Common myeloid progenitor, CD34-positive (primary cell): ENCODE measurements at regions of chr4 and their contacts with region 1.

Region 1: DNA sequence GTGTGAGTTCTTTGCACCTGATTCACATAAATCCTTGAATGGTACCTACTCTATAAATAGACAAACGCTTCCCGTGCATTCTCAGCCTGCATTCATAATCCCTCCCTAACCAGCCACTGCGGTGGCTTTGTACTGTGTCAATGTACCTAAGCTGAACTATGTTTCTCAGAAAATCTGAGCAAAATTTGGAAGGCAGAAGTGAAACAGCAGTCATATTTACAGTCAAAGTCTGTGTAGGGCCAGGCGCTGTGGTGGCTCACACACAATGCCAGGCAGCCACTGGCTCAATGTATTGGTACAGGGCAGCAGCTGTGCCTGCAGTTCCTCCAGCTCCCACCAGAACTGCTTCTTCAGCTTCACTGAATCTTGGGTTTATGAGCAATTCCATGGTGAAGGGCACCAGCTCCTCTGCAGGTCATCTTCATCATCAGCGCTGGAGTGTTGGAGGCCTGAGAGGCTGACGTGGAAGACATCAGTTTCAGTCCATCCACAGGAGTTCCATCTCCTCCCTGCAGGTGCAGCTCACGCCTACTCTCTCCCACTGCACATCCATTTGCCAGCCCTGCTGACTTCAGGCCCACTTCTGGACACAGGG is 32.3 kb upstream of the IRF2 start:
- DNase-seq: peak; percentile 52 to 75 (median 68)
- H3K4me3 ChIP-seq: no peak overlapping the region
- H3K27ac ChIP-seq: no peak overlapping the region
- H3K4me1 ChIP-seq: peaks cover 2 to 21% (median 17%) of the 10 kb centered on the region in 4 experiments
- H3K27me3 ChIP-seq: no peaks in the 10 kb centered on the region

Region 2: DNA sequence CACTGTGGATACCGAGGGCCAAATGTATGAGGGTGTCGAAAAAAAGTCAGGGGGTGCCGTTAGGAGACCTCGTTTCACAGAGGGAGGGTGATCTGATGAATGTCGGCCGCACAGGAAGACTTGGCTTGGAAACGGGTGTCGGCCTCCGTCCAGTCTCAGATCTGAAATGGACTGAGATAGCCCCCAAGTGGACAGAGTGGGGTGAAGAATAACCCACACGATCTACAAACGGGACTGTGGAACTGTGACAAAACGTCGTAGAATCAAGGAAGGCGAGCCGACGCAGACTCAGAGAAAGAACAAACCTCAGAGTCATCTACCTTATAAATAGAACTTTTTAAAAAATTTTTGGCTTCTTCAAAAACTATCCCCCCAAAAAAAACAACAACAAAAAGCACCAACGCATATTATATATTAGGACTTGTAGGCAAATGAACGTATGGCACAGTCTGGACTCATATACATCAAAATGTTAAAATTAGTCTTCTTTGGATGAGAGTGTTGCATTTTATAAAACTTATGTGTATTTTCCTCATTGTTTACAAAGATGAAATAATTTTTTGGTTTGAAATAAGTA is 31.5 kb after region 1 on chr4:
- CTCF ChIA-PET with region 1: interaction called, 24 read pairs
- POLR2A ChIA-PET with region 1: interaction called, 7 read pairs
- DNase-seq: peak; percentile 90
- H3K4me3 ChIP-seq: peak overlapping the region; percentile 18 to 99 (median 89)
- H3K27ac ChIP-seq: peak overlapping the region; percentile 90 to 98
- H3K4me1 ChIP-seq: peaks cover 21 to 48% (median 35%) of the 10 kb centered on the region in 4 experiments
- H3K27me3 ChIP-seq: no peaks in the 10 kb centered on the region